Psoas muscle (tissue), 8 donors: ENCODE measurements at regions of chr5 and their contacts with region 1.

Region 1: DNA sequence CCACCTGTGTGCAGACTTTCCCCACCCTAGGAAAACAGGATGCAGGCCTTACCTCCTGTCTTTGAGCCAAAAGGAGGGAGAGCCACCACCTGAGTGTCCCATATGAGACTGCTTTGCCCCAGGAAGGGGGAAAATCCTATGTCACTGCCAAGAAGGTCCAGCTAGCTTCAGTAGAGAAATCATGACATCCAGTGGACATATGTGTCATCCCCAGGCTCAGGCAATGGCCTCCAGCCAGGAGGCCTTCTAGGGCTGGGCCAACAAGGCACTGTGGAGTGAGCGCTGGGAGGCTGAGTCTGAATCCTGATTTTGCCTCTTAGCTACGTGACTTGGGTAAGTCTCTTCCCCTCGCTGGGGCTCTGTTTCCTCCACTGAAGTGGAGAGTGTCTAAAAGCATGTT is 60.2 kb downstream of the SMIM23 start:
- DNase-seq: peak; percentile 54 to 74
- ATAC-seq: peak in 2 of 4 donors; percentile 30 to 59
- H3K4me3 ChIP-seq: no peak overlapping the region
- H3K27ac ChIP-seq: no peak overlapping the region
- H3K4me1 ChIP-seq: no peaks in the 10 kb centered on the region
- H3K27me3 ChIP-seq: no peaks in the 10 kb centered on the region
- CTCF ChIP-seq: no peak

Region 2: GRCh38 chr5:171629221-171630026 is 216.4 kb before region 1 on chr5:
- intact Hi-C with region 1: loop called in 1 of 2 experiments (anchors 10 kb)
- DNase-seq: no peak
- ATAC-seq: no peak
- H3K4me3 ChIP-seq: no peak overlapping the region
- H3K27ac ChIP-seq: no peak overlapping the region
- H3K4me1 ChIP-seq: peaks cover 5% of the 10 kb centered on the region
- H3K27me3 ChIP-seq: peaks cover 0 to 49% (median 4%) of the 10 kb centered on the region in 3 donors
- CTCF ChIP-seq: no peak

Region 3: GRCh38 chr5:172006321-172007174 is 160.7 kb after region 1 on chr5 and contains the start of gene FBXW11:
- intact Hi-C with region 1: no loop called
- DNase-seq: peak; percentile 97 to 98
- ATAC-seq: peak; percentile 94 to 95 (median 94)
- H3K4me3 ChIP-seq: peak within 1 kb of the TSS; percentile 96
- H3K27ac ChIP-seq: peak within 1 kb of the TSS; percentile 98
- H3K4me1 ChIP-seq: peaks cover 39% of the 10 kb centered on the region
- H3K27me3 ChIP-seq: no peaks in the 10 kb centered on the region
- CTCF ChIP-seq: no peak
- total RNA-seq, gene FBXW11: 42.7 to 62.8 (median 55.5) TPM